ENCODE measurements at regions of chrX and their contacts with region 1.

Region 1: DNA sequence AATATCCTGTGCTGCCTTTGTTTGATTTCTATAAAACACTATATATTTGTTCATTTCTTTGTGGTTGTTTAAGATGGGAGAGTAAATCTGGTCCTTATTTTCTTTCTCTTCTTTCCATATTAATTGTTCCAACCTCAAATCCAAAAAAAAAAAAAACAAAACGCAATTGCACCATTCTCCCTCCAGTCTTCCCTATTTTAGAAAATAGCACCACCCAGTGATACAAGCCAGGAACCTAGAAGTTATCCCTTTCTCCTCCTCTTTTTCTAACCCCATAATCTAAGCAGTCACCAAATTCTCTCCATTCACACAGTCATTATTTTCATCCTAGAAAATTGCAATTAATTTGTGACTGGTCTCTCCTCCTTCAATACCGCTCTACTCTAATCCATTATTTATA is 107.8 kb downstream of the GABRA3 start:
- DNase-seq: peak; percentile 16
- H3K4me3 Mint-ChIP-seq: no peak overlapping the region
- H3K27ac Mint-ChIP-seq: no peak overlapping the region
- H3K4me1 Mint-ChIP-seq: peaks cover 7% of the 10 kb centered on the region
- H3K27me3 Mint-ChIP-seq: no peaks in the 10 kb centered on the region
- CTCF ChIP-seq: peak; percentile 19

Region 2: GRCh38 chrX:151753313-151754041 is 589.8 kb before region 1 on chrX:
- CTCF ChIA-PET with region 1: interaction called, 3 read pairs
- POLR2A ChIA-PET with region 1: interaction called, 3 read pairs
- intact Hi-C with region 1: loop called (anchors 1 kb)
- DNase-seq: peak; percentile 73
- H3K4me3 Mint-ChIP-seq: peak overlapping the region; percentile 36
- H3K27ac Mint-ChIP-seq: peak overlapping the region; percentile 11
- H3K4me1 Mint-ChIP-seq: peaks cover 12% of the 10 kb centered on the region
- H3K27me3 Mint-ChIP-seq: no peaks in the 10 kb centered on the region
- CTCF ChIP-seq: peak; percentile 78

Region 3: DNA sequence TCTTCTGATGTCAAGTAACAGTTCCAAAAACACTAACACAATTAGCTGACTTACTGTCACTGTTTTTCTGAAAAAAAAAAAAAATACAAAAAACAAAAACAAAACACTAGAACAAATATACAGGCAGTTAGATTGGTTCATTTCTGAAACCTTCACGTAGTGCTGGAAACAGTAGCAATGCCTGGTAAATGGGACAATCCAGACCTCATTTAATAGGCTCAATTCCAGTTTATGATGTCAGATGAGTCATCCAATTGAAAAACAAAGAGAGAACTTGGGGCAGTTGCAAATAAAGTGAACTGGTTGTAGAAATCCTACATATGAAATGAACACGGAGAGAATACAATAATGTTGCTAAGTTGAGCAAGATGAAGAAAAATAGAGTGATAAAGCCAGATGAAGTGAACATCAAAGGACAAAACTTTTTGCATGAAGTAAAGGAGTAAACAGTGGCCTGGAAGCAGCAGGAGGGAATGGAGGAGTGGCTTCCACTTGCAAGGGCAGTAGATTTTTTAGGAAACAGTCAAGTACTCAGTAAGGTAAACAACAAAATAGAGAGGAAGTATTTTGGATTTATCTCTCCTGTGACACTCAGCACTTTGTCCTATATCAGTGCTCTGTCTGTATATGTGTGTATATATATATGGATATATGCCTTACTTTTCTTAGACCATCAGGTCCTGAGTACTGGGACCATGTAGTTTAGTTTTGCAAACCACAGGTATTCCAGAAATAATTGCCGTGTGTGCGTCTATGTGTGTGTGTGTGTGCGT is 165.6 kb before region 1 on chrX:
- CTCF ChIA-PET with region 1: no interaction called
- POLR2A ChIA-PET with region 1: no interaction called
- intact Hi-C with region 1: no loop called
- DNase-seq: peak; percentile 33
- H3K4me3 Mint-ChIP-seq: no peak overlapping the region
- H3K27ac Mint-ChIP-seq: no peak overlapping the region
- H3K4me1 Mint-ChIP-seq: no peaks in the 10 kb centered on the region
- H3K27me3 Mint-ChIP-seq: no peaks in the 10 kb centered on the region
- CTCF ChIP-seq: no peak